CD8-positive, alpha-beta memory T cell (primary cell): ENCODE measurements at regions of chr15 and their contacts with region 1.

Region 1: DNA sequence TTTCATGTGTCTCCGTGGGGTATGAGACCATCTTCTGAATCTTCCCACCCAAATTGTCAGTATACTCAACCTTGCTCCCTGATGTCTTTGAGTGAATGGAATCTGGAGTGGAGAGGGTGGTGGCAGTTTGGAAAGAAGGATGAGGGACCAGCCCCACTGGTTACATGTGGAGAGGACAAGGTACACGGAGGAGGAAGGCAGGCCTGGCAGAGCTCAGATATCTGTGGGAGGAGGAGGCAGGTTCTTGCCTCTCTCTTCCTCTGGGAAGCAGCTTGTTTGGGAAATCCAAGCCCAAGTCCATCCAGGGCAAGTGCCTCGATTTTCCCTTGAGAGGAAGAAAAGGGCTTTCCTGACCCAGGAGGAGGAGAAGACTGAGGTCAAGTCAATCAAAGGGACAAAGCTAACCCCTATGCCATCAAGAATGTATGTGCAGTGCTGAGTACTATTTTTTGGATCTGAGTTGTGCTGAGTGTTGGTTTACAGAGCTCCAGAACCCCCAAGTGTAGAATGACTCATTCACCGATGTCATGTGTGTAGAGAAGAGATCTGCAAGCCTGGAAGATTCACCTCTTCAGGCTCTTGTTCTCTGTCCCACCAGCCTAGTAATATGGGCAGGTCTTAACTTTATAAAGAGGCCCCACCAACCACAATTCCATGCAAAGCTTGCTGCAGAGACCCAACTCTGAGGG is 19.8 kb upstream of the LOXL1 start:
- DNase-seq: no peak
- H3K4me3 ChIP-seq: no peak overlapping the region
- H3K4me3 Mint-ChIP-seq: no peak overlapping the region
- H3K27ac ChIP-seq: no peak overlapping the region
- H3K27ac Mint-ChIP-seq: peak overlapping the region in 1 of 8 donors; percentile 66
- H3K4me1 ChIP-seq: no peaks in the 10 kb centered on the region
- H3K4me1 Mint-ChIP-seq: peaks cover 0 to 4% (median 2%) of the 10 kb centered on the region in 3 donors
- H3K27me3 ChIP-seq: no peaks in the 10 kb centered on the region
- H3K27me3 Mint-ChIP-seq: no peaks in the 10 kb centered on the region

Region 2: DNA sequence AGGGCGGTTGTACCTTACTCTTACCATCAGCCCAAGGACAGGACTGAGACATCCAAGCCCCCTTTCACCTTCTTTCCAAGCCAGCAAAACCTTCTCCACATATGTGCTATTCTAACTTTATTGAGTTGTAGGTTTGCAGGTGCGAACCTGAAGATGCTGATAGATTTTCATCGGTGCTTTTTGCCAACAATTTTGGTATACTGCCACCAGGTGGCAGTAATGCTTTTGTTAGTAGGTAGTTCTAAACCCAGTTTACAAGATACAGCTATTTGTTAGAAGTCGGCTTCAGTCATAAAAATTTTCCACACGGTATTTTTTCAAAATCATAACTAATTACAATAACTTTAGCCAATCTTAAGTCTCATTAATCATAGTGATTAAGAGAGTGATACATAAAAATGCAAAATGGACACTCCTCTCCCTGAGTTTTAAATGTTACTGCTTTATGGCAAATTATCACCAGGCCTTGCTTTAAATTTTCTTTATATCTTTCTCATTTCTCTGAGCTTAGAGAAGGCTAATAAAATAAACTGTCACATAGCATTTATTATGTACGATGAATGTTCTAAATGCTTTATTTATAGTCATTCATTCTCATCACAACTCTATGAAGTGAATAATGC is 32.5 kb before region 1 on chr15:
- CTCF ChIA-PET with region 1: interaction called, 13 read pairs
- POLR2A ChIA-PET with region 1: no interaction called
- DNase-seq: peak in 2 of 5 donors; percentile 20 to 36
- H3K4me3 ChIP-seq: no peak overlapping the region
- H3K4me3 Mint-ChIP-seq: no peak overlapping the region
- H3K27ac ChIP-seq: no peak overlapping the region
- H3K27ac Mint-ChIP-seq: no peak overlapping the region
- H3K4me1 ChIP-seq: no peaks in the 10 kb centered on the region
- H3K4me1 Mint-ChIP-seq: no peaks in the 10 kb centered on the region
- H3K27me3 ChIP-seq: no peaks in the 10 kb centered on the region
- H3K27me3 Mint-ChIP-seq: peaks cover 6 to 68% of the 10 kb centered on the region in 2 donors

Region 3: DNA sequence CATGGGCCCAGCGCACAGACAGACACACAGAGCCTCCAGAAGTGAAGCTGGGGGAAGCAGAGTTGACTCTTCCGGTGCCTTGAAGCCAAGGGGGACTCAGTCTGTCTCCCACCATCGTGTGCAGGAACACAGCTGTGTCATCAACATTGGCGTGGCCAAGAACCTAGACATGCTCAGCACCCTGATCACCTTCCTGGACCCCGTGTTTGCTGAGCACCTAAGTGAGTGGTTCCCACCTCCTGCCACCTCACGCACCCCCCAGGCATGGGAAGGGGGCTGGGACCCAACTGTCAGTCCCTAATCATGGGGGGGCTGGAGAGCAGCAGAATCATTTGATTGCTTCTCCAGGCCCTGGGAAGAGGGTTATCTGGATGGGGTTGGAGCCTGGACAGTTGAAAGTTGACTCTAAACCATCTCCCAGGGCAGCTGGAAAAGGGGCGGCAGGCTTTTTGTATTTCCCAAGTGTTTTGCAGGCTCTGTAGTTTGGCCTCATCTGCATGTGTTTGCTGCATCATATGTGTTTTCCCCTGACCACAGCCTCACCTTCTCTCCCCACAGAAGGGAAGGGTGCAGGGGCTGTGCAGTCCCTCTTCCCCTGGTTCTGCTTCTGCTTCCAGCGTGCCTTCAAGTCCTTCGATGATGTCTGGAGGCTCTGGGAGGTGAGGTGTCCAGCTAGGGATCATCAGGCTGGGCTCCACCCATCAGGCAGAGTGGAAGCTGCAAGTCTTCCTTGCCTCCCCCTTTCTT is 20.4 kb before region 1 on chr15:
- CTCF ChIA-PET with region 1: no interaction called
- POLR2A ChIA-PET with region 1: no interaction called
- DNase-seq: no peak
- H3K4me3 ChIP-seq: no peak overlapping the region
- H3K4me3 Mint-ChIP-seq: no peak overlapping the region
- H3K27ac ChIP-seq: no peak overlapping the region
- H3K27ac Mint-ChIP-seq: peak overlapping the region in 2 of 8 donors; percentile 29 to 34
- H3K4me1 ChIP-seq: no peaks in the 10 kb centered on the region
- H3K4me1 Mint-ChIP-seq: no peaks in the 10 kb centered on the region
- H3K27me3 ChIP-seq: no peaks in the 10 kb centered on the region
- H3K27me3 Mint-ChIP-seq: peaks cover 22 to 46% of the 10 kb centered on the region in 2 donors

Region 4: GRCh38 chr15:73927476-73928240 is 21.2 kb after region 1 on chr15:
- CTCF ChIA-PET with region 1: interaction called, 13 read pairs
- POLR2A ChIA-PET with region 1: no interaction called
- DNase-seq: peak; percentile 61 to 84 (median 75)
- H3K4me3 ChIP-seq: peak overlapping the region; percentile 49
- H3K4me3 Mint-ChIP-seq: peak overlapping the region; percentile 75 to 93 (median 81)
- H3K27ac ChIP-seq: no peak overlapping the region
- H3K27ac Mint-ChIP-seq: peak overlapping the region; percentile 22 to 92 (median 51)
- H3K4me1 ChIP-seq: peaks cover 21% of the 10 kb centered on the region
- H3K4me1 Mint-ChIP-seq: peaks cover 32 to 52% (median 43%) of the 10 kb centered on the region in 3 donors
- H3K27me3 ChIP-seq: no peaks in the 10 kb centered on the region
- H3K27me3 Mint-ChIP-seq: no peaks in the 10 kb centered on the region